ENCODE measurements at regions of chr10 and their contacts with region 1.

Region 1: DNA sequence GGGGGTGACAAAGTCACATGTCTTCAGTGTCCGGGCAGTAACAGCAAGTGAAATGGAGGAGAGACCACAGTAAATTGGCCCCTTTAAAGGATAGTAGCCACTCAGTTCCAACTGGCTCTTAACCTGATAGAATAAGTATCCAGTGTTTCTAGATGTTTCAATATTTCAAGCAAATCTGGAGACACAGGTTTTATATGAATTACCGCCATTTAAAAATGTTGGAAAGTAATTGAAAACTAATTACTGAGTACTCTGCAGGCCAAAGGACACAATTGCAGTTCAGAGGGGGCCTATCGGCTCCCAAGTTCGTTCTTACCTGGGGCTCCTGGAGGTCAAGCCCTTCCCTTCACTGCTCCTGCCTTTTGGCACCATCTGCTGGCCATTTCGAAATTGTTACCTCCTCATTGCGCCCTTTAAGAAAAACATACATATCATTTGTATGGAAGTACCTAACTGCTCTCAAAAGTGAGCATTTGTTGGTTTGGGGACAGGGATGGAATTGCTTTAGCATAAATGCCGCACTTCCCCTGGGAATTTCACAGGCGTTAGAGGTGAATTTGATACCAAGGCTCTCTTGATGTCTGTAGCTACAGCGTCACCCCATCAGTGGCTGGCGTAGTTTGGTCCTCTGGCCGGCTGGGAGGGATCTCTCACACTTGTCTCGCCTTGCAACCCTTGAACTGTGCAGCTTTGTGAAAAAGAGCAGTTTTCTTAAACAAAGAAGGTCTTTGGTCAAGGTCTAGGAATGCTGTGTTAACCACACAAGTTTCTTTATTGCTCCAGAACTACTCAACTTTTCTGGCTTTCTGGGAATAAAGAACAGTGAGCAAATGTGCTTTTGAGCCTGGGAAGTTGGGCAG is 220.0 kb downstream of the ARHGAP21 start:
- DNase-seq: peak; percentile 75 to 80
- H3K4me3 ChIP-seq: no peak overlapping the region
- H3K4me3 Mint-ChIP-seq: no peak overlapping the region
- H3K27ac Mint-ChIP-seq: no peak overlapping the region
- H3K4me1 ChIP-seq: no peaks in the 10 kb centered on the region
- H3K4me1 Mint-ChIP-seq: peaks cover 7% of the 10 kb centered on the region
- H3K27me3 ChIP-seq: no peaks in the 10 kb centered on the region
- H3K27me3 Mint-ChIP-seq: no peaks in the 10 kb centered on the region
- CTCF ChIP-seq: peak; percentile 82 to 87

Region 2: GRCh38 chr10:24201503-24202180 is 302.0 kb before region 1 on chr10:
- CTCF ChIA-PET with region 1: no interaction called
- POLR2A ChIA-PET with region 1: no interaction called
- intact Hi-C with region 1: loop called (anchors 5 kb)
- DNase-seq: no peak
- H3K4me3 ChIP-seq: no peak overlapping the region
- H3K4me3 Mint-ChIP-seq: no peak overlapping the region
- H3K27ac Mint-ChIP-seq: peak overlapping the region; percentile 28
- H3K4me1 ChIP-seq: peaks cover 21% of the 10 kb centered on the region
- H3K4me1 Mint-ChIP-seq: peaks cover 28% of the 10 kb centered on the region
- H3K27me3 ChIP-seq: no peaks in the 10 kb centered on the region
- H3K27me3 Mint-ChIP-seq: no peaks in the 10 kb centered on the region
- CTCF ChIP-seq: no peak

Region 3: DNA sequence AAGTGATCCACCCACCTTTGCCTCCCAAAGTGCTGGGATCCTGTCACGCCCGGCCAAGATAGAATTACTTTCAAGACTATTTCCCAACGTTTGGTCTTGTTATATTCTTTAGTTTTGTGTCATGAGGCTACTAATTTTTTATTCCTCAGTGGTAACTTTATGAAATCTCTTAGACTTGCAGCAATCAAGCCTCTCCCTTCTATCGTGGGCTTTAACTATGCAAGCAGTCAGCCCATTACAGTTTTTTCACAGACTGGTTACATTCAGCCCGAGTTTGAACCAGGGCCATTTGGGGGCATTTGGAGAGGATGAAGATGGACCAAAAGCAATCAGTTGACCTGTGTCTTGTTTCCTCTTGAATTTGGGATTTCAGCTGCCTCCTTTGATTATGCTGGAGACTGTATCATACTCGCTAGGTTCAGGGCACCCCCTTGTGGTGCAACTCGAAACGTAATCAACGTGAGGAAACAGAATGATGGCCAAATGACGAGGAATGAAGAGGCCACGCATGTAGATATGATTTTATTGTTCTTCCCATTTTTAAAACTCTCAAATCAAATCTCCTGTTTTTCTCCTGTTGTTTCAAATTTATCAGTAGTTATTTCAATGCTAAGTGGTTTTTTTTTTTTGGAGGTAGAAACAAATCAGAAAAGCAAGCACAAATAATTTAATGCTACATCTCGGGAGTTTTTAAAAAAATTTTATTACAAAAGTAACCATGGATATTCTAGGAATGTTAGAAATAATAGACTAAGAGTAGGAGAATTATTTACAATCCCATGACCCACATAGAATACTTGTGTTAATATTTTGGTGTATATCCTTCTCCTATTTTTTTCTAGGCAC is 143.2 kb before region 1 on chr10:
- CTCF ChIA-PET with region 1: interaction called, 3 read pairs
- POLR2A ChIA-PET with region 1: no interaction called
- intact Hi-C with region 1: loop called (anchors 1 kb)
- DNase-seq: peak; percentile 75 to 84
- H3K4me3 ChIP-seq: no peak overlapping the region
- H3K4me3 Mint-ChIP-seq: no peak overlapping the region
- H3K27ac Mint-ChIP-seq: peak overlapping the region; percentile 36
- H3K4me1 ChIP-seq: no peaks in the 10 kb centered on the region
- H3K4me1 Mint-ChIP-seq: peaks cover 7% of the 10 kb centered on the region
- H3K27me3 ChIP-seq: no peaks in the 10 kb centered on the region
- H3K27me3 Mint-ChIP-seq: no peaks in the 10 kb centered on the region
- CTCF ChIP-seq: peak; percentile 91 to 92

Region 4: DNA sequence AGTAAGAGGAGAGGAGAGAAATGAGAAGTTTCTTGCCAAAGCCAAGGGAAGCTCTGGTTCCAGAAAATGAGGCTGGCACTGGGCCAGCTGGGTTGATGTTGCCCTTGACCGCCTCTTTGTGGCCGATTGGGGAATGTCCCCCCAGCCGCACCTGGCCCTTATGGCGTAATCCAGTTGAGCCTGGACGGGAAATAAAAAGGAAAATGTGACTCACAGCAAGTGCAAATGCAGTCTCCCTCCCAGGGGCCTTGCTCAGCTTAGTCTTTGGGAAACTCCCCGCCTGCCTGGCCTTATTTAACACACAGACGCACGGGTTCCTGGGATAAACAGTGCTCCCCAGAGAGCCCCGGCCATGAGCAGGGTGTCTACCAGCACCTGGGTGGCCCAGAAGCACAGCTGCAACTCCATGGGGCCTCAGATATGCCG is 120.0 kb before region 1 on chr10:
- CTCF ChIA-PET with region 1: interaction called, 4 read pairs
- POLR2A ChIA-PET with region 1: no interaction called
- intact Hi-C with region 1: loop called (anchors 1 kb)
- DNase-seq: peak; percentile 87 to 90
- H3K4me3 ChIP-seq: no peak overlapping the region
- H3K4me3 Mint-ChIP-seq: peak overlapping the region; percentile 58
- H3K27ac Mint-ChIP-seq: peak overlapping the region; percentile 92
- H3K4me1 ChIP-seq: peaks cover 31% of the 10 kb centered on the region
- H3K4me1 Mint-ChIP-seq: peaks cover 23% of the 10 kb centered on the region
- H3K27me3 ChIP-seq: no peaks in the 10 kb centered on the region
- H3K27me3 Mint-ChIP-seq: no peaks in the 10 kb centered on the region
- CTCF ChIP-seq: peak; percentile 60 to 67

Region 5: GRCh38 chr10:24415455-24416125 is 88.1 kb before region 1 on chr10:
- CTCF ChIA-PET with region 1: interaction called, 3 read pairs
- POLR2A ChIA-PET with region 1: no interaction called
- intact Hi-C with region 1: loop called (anchors 1 kb)
- DNase-seq: peak; percentile 51 to 62
- H3K4me3 ChIP-seq: no peak overlapping the region
- H3K4me3 Mint-ChIP-seq: peak overlapping the region; percentile 16
- H3K27ac Mint-ChIP-seq: peak overlapping the region; percentile 63
- H3K4me1 ChIP-seq: peaks cover 44% of the 10 kb centered on the region
- H3K4me1 Mint-ChIP-seq: peaks cover 29% of the 10 kb centered on the region
- H3K27me3 ChIP-seq: no peaks in the 10 kb centered on the region
- H3K27me3 Mint-ChIP-seq: no peaks in the 10 kb centered on the region
- CTCF ChIP-seq: no peak

Region 6: DNA sequence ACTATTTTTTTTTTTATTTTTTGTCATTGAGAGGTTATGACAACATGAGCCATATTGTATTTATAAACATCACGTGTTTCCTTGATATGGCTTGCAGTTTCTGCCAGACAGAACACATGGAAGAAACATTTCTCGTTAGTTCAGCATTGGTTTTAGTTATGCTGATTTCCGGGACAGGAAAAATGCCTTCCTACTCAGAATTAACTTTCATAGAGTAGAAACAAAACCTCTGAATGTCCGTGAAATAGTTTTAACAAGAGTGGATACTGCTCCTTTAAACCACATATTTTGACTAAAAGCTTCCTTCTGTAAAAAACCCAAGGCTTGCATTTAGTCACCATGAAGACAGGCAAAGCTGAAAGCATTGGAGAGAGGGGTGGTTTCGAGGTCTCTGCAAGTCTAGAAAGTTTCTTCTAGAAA is 54.4 kb before region 1 on chr10:
- CTCF ChIA-PET with region 1: no interaction called
- POLR2A ChIA-PET with region 1: no interaction called
- intact Hi-C with region 1: no loop called
- DNase-seq: no peak
- H3K4me3 ChIP-seq: no peak overlapping the region
- H3K4me3 Mint-ChIP-seq: no peak overlapping the region
- H3K27ac Mint-ChIP-seq: peak overlapping the region; percentile 50
- H3K4me1 ChIP-seq: peaks cover 12% of the 10 kb centered on the region
- H3K4me1 Mint-ChIP-seq: peaks cover 38% of the 10 kb centered on the region
- H3K27me3 ChIP-seq: no peaks in the 10 kb centered on the region
- H3K27me3 Mint-ChIP-seq: no peaks in the 10 kb centered on the region
- CTCF ChIP-seq: no peak

Region 7: GRCh38 chr10:24465891-24466818 is 37.5 kb before region 1 on chr10:
- CTCF ChIA-PET with region 1: no interaction called
- POLR2A ChIA-PET with region 1: no interaction called
- intact Hi-C with region 1: loop called (anchors 1 kb)
- DNase-seq: peak; percentile 78
- H3K4me3 ChIP-seq: peak overlapping the region; percentile 37
- H3K4me3 Mint-ChIP-seq: peak overlapping the region; percentile 73
- H3K27ac Mint-ChIP-seq: peak overlapping the region; percentile 71
- H3K4me1 ChIP-seq: peaks cover 52% of the 10 kb centered on the region
- H3K4me1 Mint-ChIP-seq: peaks cover 66% of the 10 kb centered on the region
- H3K27me3 ChIP-seq: no peaks in the 10 kb centered on the region
- H3K27me3 Mint-ChIP-seq: no peaks in the 10 kb centered on the region
- CTCF ChIP-seq: no peak

Region 8: GRCh38 chr10:24528946-24529345 is 25.3 kb after region 1 on chr10:
- CTCF ChIA-PET with region 1: no interaction called
- POLR2A ChIA-PET with region 1: no interaction called
- intact Hi-C with region 1: no loop called
- DNase-seq: no peak
- H3K4me3 ChIP-seq: no peak overlapping the region
- H3K4me3 Mint-ChIP-seq: no peak overlapping the region
- H3K27ac Mint-ChIP-seq: no peak overlapping the region
- H3K4me1 ChIP-seq: no peaks in the 10 kb centered on the region
- H3K4me1 Mint-ChIP-seq: no peaks in the 10 kb centered on the region
- H3K27me3 ChIP-seq: no peaks in the 10 kb centered on the region
- H3K27me3 Mint-ChIP-seq: no peaks in the 10 kb centered on the region
- CTCF ChIP-seq: no peak

Measured in Caco-2 (cell line).